Naive thymus-derived CD4-positive, alpha-beta T cell (primary cell): ENCODE measurements at regions of chr2 and their contacts with region 1.

Region 1: DNA sequence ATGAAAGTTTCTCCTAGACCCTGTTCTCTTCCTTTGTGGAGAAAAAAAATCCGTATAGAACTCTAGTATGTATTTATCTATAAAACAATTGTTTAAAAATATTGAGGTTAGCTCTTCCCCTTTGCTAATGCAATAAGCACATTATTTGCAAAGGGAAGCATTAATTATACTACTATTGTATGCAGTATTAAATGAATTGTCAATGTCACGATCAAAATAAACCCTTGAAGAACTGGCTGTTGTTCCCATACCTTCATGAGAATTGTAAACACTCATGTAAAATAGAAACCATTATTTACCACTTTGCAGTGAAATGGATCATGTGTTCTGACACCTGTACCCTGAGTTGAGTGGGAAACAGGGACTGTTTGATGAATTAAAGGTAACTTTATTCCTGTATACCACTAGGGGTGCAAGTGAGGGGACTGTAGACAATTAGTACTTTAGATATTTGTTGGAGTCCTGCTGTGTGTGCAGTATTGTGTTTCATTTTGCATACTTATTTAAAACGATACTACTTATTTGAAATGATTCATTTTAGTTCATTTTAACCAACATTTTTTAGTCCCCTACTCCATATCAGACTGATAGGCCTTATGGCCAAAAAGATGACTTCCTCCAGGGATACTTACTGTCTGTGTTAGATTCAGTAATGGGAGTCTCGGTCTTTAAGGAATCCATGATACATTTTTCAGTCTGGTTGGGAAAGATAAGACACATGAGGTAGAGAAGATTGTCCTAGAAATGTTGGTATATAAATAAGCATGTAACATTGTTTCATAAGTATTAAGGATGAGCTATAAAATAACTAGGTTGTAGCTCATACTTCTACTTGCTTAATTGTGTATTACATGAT is 7.9 kb downstream of the PKP4 start:
- DNase-seq: peak in 4 of 9 donors; percentile 10 to 25 (median 14)
- ATAC-seq: peak; percentile 76
- H3K4me3 ChIP-seq: no peak overlapping the region
- H3K4me3 Mint-ChIP-seq: no peak overlapping the region
- H3K27ac ChIP-seq: no peak overlapping the region
- H3K27ac Mint-ChIP-seq: no peak overlapping the region
- H3K4me1 ChIP-seq: no peaks in the 10 kb centered on the region
- H3K4me1 Mint-ChIP-seq: peaks cover 0 to 13% (median 7%) of the 10 kb centered on the region in 7 donors
- H3K27me3 ChIP-seq: no peaks in the 10 kb centered on the region
- H3K27me3 Mint-ChIP-seq: peaks cover 0 to 2% (median 0%) of the 10 kb centered on the region in 5 donors

Region 2: GRCh38 chr2:158366342-158366741 is 98.3 kb before region 1 on chr2:
- CTCF ChIA-PET with region 1: no interaction called
- POLR2A ChIA-PET with region 1: no interaction called
- intact Hi-C with region 1: no loop called
- DNase-seq: no peak
- ATAC-seq: no peak
- H3K4me3 ChIP-seq: no peak overlapping the region
- H3K4me3 Mint-ChIP-seq: no peak overlapping the region
- H3K27ac ChIP-seq: no peak overlapping the region
- H3K27ac Mint-ChIP-seq: no peak overlapping the region
- H3K4me1 ChIP-seq: no peaks in the 10 kb centered on the region
- H3K4me1 Mint-ChIP-seq: no peaks in the 10 kb centered on the region
- H3K27me3 ChIP-seq: no peaks in the 10 kb centered on the region
- H3K27me3 Mint-ChIP-seq: no peaks in the 10 kb centered on the region

Region 3: DNA sequence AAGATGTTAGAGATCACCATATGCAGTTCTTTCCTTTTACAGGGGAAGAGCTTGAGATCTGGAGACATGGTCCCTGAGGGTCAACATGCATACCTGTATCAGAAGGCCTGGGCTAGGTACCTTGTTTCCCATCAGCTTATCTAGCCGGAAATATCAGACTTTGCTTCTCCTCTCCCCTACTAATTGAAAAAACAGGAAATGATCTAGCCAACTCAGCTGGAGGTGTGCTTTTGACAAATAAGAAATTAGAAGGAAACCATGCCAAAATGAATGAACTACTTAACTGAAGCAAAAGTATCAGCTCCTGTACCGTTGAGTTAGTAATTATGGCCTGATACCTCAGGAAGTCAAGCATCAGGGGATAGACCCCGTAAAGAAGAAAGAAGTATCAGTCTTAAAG is 12.5 kb after region 1 on chr2:
- CTCF ChIA-PET with region 1: no interaction called
- POLR2A ChIA-PET with region 1: interaction called, 3 read pairs
- intact Hi-C with region 1: loop called in 1 of 2 experiments (anchors 1 kb)
- DNase-seq: peak in 6 of 9 donors; percentile 5 to 25 (median 17)
- ATAC-seq: peak; percentile 42
- H3K4me3 ChIP-seq: no peak overlapping the region
- H3K4me3 Mint-ChIP-seq: peak overlapping the region; percentile 2 to 77 (median 63)
- H3K27ac ChIP-seq: peak overlapping the region; percentile 23
- H3K27ac Mint-ChIP-seq: peak overlapping the region; percentile 49 to 87 (median 80)
- H3K4me1 ChIP-seq: peaks cover 9 to 10% of the 10 kb centered on the region in 2 donors
- H3K4me1 Mint-ChIP-seq: peaks cover 10 to 33% (median 19%) of the 10 kb centered on the region in 7 donors
- H3K27me3 ChIP-seq: no peaks in the 10 kb centered on the region
- H3K27me3 Mint-ChIP-seq: no peaks in the 10 kb centered on the region

Region 4: GRCh38 chr2:159788253-159788652 is 1323.6 kb after region 1 on chr2:
- CTCF ChIA-PET with region 1: no interaction called
- POLR2A ChIA-PET with region 1: no interaction called
- intact Hi-C with region 1: no loop called
- DNase-seq: no peak
- ATAC-seq: no peak
- H3K4me3 ChIP-seq: no peak overlapping the region
- H3K4me3 Mint-ChIP-seq: no peak overlapping the region
- H3K27ac ChIP-seq: no peak overlapping the region
- H3K27ac Mint-ChIP-seq: peak overlapping the region in 1 of 9 donors; percentile 49
- H3K4me1 ChIP-seq: no peaks in the 10 kb centered on the region
- H3K4me1 Mint-ChIP-seq: peaks cover 0 to 13% (median 6%) of the 10 kb centered on the region in 7 donors
- H3K27me3 ChIP-seq: no peaks in the 10 kb centered on the region
- H3K27me3 Mint-ChIP-seq: no peaks in the 10 kb centered on the region